ENCODE measurements at regions of chr17 and their contacts with region 1.

Region 1: GRCh38 chr17:31111183-31111582 is 16.4 kb downstream of the NF1 start:
- DNase-seq: no peak
- H3K4me3 ChIP-seq: no peak overlapping the region
- H3K27ac ChIP-seq: no peak overlapping the region
- H3K4me1 ChIP-seq: peaks cover 0 to 6% (median 4%) of the 10 kb centered on the region in 4 donors
- H3K27me3 ChIP-seq: no peaks in the 10 kb centered on the region
- CTCF ChIP-seq: no peak
- EP300 ChIP-seq: no peak
- POLR2A ChIP-seq: no peak

Region 2: GRCh38 chr17:30992551-30992950 is 118.6 kb before region 1 on chr17:
- in situ Hi-C with region 1: no loop called
- intact Hi-C with region 1: no loop called
- DNase-seq: no peak
- H3K4me3 ChIP-seq: no peak overlapping the region
- H3K27ac ChIP-seq: no peak overlapping the region
- H3K4me1 ChIP-seq: peaks cover 0 to 5% (median 0%) of the 10 kb centered on the region in 4 donors
- H3K27me3 ChIP-seq: no peaks in the 10 kb centered on the region
- CTCF ChIP-seq: no peak
- EP300 ChIP-seq: no peak
- POLR2A ChIP-seq: no peak

Region 3: DNA sequence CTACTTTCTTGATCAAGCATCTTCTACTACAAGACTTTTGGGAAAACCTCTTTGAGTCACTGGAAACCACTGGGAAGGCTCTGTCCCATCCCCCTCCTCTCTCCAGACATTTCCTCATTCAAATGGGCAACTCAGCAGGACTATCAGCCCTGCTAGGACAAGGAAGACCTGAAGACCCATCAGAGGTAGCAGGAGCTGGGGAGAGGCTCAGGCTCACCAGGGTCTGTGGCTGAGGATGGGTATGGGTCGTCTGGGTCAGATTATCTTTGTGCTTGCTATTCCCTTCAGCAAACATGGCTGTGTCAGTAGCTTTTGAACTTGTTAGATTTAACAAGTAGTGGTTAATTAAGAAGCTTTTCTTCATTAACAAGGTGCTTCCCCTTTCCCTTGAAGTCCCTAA is 31.5 kb before region 1 on chr17:
- in situ Hi-C with region 1: no loop called
- intact Hi-C with region 1: loop called (anchors 1 kb)
- DNase-seq: no peak
- H3K4me3 ChIP-seq: no peak overlapping the region
- H3K27ac ChIP-seq: no peak overlapping the region
- H3K4me1 ChIP-seq: no peaks in the 10 kb centered on the region
- H3K27me3 ChIP-seq: no peaks in the 10 kb centered on the region
- CTCF ChIP-seq: no peak
- EP300 ChIP-seq: no peak
- POLR2A ChIP-seq: no peak